HCT116 (cell line): ENCODE measurements at regions of chr6 and their contacts with region 1.

Region 1: DNA sequence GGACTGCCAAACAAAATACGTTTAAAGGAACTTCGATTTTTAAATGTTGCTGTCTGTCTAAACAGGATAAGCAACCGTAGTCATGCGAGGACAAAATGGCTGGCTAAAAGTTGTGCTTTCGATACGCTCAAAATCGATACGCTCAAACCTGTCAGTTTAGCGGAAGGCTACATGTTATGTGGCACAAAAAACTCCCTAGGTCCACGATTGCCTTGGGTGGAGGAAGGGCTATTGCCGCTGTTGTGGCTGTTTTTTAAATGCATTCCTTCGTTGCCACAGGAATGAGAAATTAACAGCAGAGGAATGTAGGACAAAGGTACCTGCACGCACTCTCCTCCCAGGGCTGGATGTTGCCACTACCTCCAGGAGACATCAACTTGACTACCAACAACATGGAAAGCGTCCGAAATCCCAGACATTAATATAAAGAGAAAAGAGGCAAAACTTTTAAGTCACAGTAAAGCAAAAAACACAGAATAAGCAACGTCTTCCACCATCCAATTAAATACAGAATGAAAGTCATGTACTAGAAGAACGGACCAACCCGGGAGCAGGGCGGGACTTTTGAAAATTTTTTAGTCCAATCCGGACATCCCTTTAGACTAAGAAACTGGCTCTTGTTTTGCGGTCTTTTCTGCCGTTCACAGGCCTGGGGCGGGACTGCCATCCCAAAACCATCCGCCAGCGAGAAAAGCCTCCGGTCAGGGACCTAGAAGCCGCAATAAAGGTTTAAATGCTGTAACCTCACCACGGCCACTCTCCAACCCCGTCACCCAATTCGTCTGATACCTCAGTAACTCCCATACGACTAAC is 32.2 kb upstream of the HFE start:
- DNase-seq: peak; percentile 98
- ATAC-seq: peak; percentile 70
- H3K4me3 ChIP-seq: peak overlapping the region; percentile 52 to 73
- H3K27ac ChIP-seq: peak overlapping the region; percentile 85
- H3K4me1 ChIP-seq: peaks cover 41 to 68% of the 10 kb centered on the region in 2 experiments
- H3K27me3 ChIP-seq: no peaks in the 10 kb centered on the region
- CTCF ChIP-seq: 0 out of 6 replicates have a peak, but pooled peaks of 1 of the 3 experiments have one; percentile 5
- POLR2A ChIP-seq: no peak
- RAD21 ChIP-seq: peak; percentile 30

Region 2: DNA sequence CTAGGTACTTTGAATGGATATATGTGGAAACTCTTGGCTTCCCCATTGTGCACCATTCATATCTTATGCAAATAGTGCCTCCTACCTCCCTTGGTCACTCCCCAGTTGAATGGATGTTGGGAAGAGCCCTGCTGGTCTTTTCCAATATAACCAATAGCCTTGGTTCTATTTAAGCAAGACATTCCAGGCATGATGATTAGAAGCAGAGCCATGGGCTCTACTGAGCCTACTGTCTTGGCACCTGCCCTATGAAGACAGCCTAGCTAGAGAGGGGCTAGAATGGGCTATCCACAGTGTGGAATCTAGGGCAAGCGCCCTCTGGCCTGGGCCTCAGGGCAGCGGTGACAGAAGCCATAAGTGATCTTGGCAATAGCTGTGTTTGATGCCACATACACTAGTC is 238.8 kb before region 1 on chr6:
- CTCF ChIA-PET with region 1: no interaction called
- POLR2A ChIA-PET with region 1: no interaction called
- RAD21 ChIA-PET with region 1: no interaction called
- intact Hi-C with region 1: no loop called
- DNase-seq: no peak
- ATAC-seq: no peak
- H3K4me3 ChIP-seq: no peak overlapping the region
- H3K27ac ChIP-seq: no peak overlapping the region
- H3K4me1 ChIP-seq: no peaks in the 10 kb centered on the region
- H3K27me3 ChIP-seq: no peaks in the 10 kb centered on the region
- CTCF ChIP-seq: no peak
- POLR2A ChIP-seq: no peak
- RAD21 ChIP-seq: no peak

Region 3: DNA sequence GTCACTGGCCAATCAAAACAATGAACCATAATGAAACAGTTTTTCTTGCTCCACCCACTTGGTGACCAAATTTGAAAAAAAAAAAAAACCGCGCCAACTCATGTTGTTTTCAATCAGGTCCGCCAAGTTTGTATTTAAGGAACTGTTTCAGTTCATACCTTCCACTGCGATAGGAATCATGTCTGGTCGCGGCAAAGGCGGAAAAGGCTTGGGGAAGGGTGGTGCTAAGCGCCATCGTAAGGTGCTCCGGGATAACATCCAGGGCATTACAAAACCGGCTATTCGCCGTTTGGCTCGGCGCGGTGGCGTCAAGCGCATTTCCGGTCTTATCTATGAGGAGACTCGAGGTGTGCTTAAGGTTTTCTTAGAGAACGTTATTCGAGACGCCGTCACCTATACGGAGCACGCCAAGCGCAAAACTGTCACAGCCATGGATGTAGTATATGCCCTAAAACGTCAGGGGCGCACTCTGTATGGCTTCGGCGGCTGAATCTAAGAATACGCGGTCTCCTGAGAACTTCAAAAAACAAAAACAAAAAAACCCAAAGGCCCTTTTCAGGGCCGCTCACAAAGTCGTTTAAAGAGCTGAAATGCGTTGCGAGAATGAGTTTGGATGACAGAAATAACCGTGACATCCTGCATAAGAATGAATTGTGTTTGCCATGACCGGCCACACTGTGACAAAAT is 48.9 kb after region 1 on chr6:
- CTCF ChIA-PET with region 1: interaction called, 4 read pairs
- POLR2A ChIA-PET with region 1: interaction called, 36 read pairs
- RAD21 ChIA-PET with region 1: no interaction called
- intact Hi-C with region 1: loop called (anchors 2 kb)
- DNase-seq: peak; percentile 95
- ATAC-seq: peak; percentile 74
- H3K4me3 ChIP-seq: peak overlapping the region; percentile 48 to 59
- H3K27ac ChIP-seq: peak overlapping the region; percentile 94
- H3K4me1 ChIP-seq: peaks cover 17 to 39% of the 10 kb centered on the region in 2 experiments
- H3K27me3 ChIP-seq: no peaks in the 10 kb centered on the region
- CTCF ChIP-seq: peak in 2 of 3 experiments; percentile 35 to 40; a peak in 2 of 6 replicates
- POLR2A ChIP-seq: peak; percentile 99
- RAD21 ChIP-seq: peak; percentile 42